ENCODE measurements at regions of chr20 and their contacts with region 1.

Region 1: DNA sequence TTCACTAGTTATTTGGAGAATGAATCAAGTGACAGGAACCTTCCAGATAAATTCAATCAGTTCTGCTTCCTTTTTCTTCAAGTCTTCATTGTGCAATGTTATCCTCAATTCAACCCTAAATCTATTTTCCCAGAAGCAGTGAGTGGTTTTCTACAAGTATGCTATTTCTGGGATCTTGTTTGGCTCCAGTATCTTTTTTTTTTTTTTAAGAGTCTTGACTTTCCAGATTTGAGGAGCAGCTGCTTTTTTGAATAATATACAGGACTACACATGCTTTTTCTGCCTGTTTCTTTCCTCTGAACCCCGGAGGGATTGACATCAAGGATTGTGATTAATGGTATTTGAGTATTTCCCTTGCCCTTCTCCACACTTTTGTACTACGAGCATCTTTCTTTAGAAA is 339.2 kb upstream of the JAG1 start:
- DNase-seq: no peak

Region 2: GRCh38 chr20:9442858-9443257 is 1570.1 kb before region 1 on chr20:
- intact Hi-C with region 1: no loop called
- DNase-seq: no peak

Region 3: GRCh38 chr20:10919396-10920140 is 93.4 kb before region 1 on chr20:
- intact Hi-C with region 1: loop called in 1 of 2 experiments (anchors 10 kb)
- DNase-seq: peak; percentile 81

Region 4: GRCh38 chr20:11045412-11046175 is 32.6 kb after region 1 on chr20:
- intact Hi-C with region 1: loop called in 1 of 2 experiments (anchors 1 kb)
- DNase-seq: no peak

Measured in posterior vena cava (tissue), 2 donors.